Heart right ventricle (tissue), 16 donors: ENCODE measurements at regions of chr12 and their contacts with region 1.

Region 1: GRCh38 chr12:50314629-50315312 is 31.5 kb upstream of the LIMA1 start:
- DNase-seq: no peak
- ATAC-seq: no peak
- H3K4me3 ChIP-seq: no peak overlapping the region
- H3K27ac ChIP-seq: no peak overlapping the region
- H3K4me1 ChIP-seq: no peaks in the 10 kb centered on the region
- H3K27me3 ChIP-seq: no peaks in the 10 kb centered on the region
- CTCF ChIP-seq: peak in 8 of 9 donors; percentile 35 to 72 (median 68)

Region 2: DNA sequence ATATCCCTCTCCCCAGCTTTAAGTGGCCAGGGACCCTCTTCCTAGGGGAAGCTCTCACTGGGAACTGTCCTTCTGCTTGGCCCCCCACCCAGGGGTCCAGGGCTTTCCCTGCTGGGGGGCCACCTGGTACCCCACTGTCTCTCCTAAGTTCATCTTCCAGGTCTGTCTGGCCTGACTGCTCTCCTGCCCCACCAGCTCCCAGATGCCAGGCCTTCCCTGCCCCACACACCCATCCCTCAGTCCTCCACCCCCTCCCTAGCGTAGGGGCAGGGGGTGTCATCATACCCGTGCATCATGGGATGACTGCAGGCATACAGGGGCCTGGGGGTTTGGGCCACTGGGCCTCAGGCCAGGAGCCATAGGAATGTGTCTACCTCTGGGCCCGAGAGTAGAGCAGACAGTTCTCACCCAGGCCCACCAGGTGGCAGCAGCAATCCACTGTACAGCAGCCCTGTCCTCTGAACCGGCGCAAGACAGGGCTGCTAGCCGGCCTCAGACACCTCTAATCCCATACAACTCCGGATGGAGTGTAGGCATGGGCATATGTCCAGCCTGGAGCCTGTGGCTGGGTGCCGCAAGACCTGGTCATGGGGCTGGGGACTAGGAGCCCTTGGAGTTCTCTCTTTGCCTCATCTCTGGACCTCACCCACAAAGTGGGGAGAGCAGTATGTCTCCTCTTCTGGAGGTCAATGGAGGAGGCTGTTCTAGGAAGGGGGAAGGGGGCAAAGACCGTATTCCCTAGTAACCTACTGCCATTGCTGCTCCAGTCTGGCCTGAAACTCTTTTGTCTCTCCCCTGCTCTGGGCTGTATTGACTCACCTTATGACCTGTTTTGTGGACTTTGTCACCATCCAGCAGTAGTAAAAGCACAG is 239.6 kb before region 1 on chr12:
- intact Hi-C with region 1: loop called in 6 of 10 experiments (anchors 10 kb)
- DNase-seq: peak; percentile 84 to 85
- ATAC-seq: peak; percentile 84 to 92 (median 88)
- H3K4me3 ChIP-seq: no peak overlapping the region
- H3K27ac ChIP-seq: no peak overlapping the region
- H3K4me1 ChIP-seq: peaks cover 3 to 13% (median 6%) of the 10 kb centered on the region in 9 donors
- H3K27me3 ChIP-seq: no peaks in the 10 kb centered on the region
- CTCF ChIP-seq: peak; percentile 76 to 97 (median 94)

Region 3: DNA sequence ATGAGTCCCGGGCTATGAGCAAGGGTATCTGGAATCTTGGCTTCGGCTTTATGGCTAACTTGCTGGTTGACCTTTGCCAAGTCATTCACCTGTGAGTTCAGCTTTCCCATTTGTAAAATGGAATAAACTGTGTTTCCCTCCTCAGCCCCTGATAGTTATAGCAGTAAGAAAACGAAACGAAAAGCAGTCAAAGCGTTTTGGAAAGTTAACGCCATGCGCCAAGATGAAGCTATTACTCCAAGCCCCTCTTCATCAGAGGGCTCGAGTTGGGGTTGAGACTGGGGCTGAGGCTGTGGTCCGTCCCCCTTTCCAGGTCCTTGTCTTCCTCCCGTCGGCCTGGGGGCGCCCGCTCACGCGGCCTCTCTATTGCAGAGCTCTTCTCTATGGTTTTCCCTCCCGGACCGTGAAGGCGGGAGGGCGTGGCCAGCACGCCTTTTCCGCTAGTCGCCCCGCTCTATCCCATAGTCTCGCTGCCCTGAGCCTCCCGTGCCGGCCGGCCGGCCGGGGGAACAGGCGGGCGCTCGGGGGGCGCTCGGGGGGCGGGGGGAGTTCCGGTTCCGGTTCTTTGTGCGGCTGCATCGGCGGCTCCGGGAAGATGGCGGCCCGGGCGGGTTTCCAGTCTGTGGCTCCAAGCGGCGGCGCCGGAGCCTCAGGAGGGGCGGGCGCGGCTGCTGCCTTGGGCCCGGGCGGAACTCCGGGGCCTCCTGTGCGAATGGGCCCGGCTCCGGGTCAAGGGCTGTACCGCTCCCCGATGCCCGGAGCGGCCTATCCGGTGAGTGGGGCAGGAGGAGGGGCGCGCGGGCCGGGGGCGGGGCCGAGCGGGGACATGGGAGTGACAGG is 229.8 kb before region 1 on chr12 and contains the start of gene SMARCD1:
- intact Hi-C with region 1: loop called in 2 of 10 experiments (anchors 10 kb)
- DNase-seq: peak; percentile 93
- ATAC-seq: peak; percentile 95 to 98 (median 96)
- H3K4me3 ChIP-seq: peak within 1 kb of the TSS; percentile 73 to 99 (median 90)
- H3K27ac ChIP-seq: peak within 1 kb of the TSS; percentile 95 to 100 (median 98)
- H3K4me1 ChIP-seq: peaks cover 0 to 34% (median 13%) of the 10 kb centered on the region in 9 donors
- H3K27me3 ChIP-seq: no peaks in the 10 kb centered on the region
- CTCF ChIP-seq: peak in 8 of 9 donors; percentile 12 to 78 (median 59)
- total RNA-seq, gene SMARCD1: 13.3 to 24.0 (median 17.4) TPM

Region 4: GRCh38 chr12:50187084-50187900 is 127.5 kb before region 1 on chr12:
- intact Hi-C with region 1: loop called in 7 of 10 experiments (anchors 5 to 10 kb)
- DNase-seq: no peak
- ATAC-seq: peak in 4 of 8 donors; percentile 13 to 37 (median 24)
- H3K4me3 ChIP-seq: no peak overlapping the region
- H3K27ac ChIP-seq: peak overlapping the region in 7 of 10 donors; percentile 8 to 72 (median 12)
- H3K4me1 ChIP-seq: peaks cover 0 to 58% (median 50%) of the 10 kb centered on the region in 9 donors
- H3K27me3 ChIP-seq: no peaks in the 10 kb centered on the region
- CTCF ChIP-seq: no peak

Region 5: GRCh38 chr12:50211392-50212070 is 103.2 kb before region 1 on chr12:
- intact Hi-C with region 1: loop called in 4 of 10 experiments (anchors 5 to 10 kb)
- DNase-seq: no peak
- ATAC-seq: peak in 7 of 8 donors; percentile 47 to 79 (median 72)
- H3K4me3 ChIP-seq: no peak overlapping the region
- H3K27ac ChIP-seq: peak overlapping the region; percentile 31 to 83 (median 68)
- H3K4me1 ChIP-seq: peaks cover 5 to 36% (median 14%) of the 10 kb centered on the region in 9 donors
- H3K27me3 ChIP-seq: no peaks in the 10 kb centered on the region
- CTCF ChIP-seq: peak in 4 of 9 donors; percentile 12 to 44 (median 30)

Region 6: GRCh38 chr12:50222275-50222795 is 92.4 kb before region 1 on chr12:
- intact Hi-C with region 1: loop called in 3 of 10 experiments (anchors 5 to 10 kb)
- DNase-seq: peak in 1 of 2 donors; percentile 69
- ATAC-seq: peak; percentile 79 to 91 (median 87)
- H3K4me3 ChIP-seq: peak overlapping the region; percentile 18 to 58 (median 53)
- H3K27ac ChIP-seq: peak overlapping the region; percentile 43 to 88 (median 78)
- H3K4me1 ChIP-seq: peaks cover 0 to 46% (median 28%) of the 10 kb centered on the region in 9 donors
- H3K27me3 ChIP-seq: no peaks in the 10 kb centered on the region
- CTCF ChIP-seq: peak in 6 of 9 donors; percentile 12 to 53 (median 34)

Region 7: GRCh38 chr12:50275556-50275955 is 39.2 kb before region 1 on chr12:
- intact Hi-C with region 1: no loop called
- DNase-seq: peak; percentile 29 to 77
- ATAC-seq: peak; percentile 68 to 94 (median 88)
- H3K4me3 ChIP-seq: no peak overlapping the region
- H3K27ac ChIP-seq: peak overlapping the region; percentile 23 to 92 (median 58)
- H3K4me1 ChIP-seq: peaks cover 0 to 61% (median 29%) of the 10 kb centered on the region in 9 donors
- H3K27me3 ChIP-seq: no peaks in the 10 kb centered on the region
- CTCF ChIP-seq: no peak